Activated CD8-positive, alpha-beta memory T cell treated with anti-CD3 and anti-CD28 coated beads, Interleukin-2, amount 10 ng/mL, durations not matched to agents 7 days and 5 days (primary cell): ENCODE measurements at regions of chr6 and their contacts with region 1.

Region 1: GRCh38 chr6:29016559-29017427 is 11.7 kb upstream of the ZNF311 start:
- DNase-seq: peak; percentile 90
- ATAC-seq: peak; percentile 89
- H3K4me3 Mint-ChIP-seq: peak overlapping the region; percentile 82
- H3K27ac Mint-ChIP-seq: peak overlapping the region; percentile 92
- H3K4me1 Mint-ChIP-seq: peaks cover 16% of the 10 kb centered on the region
- H3K27me3 Mint-ChIP-seq: peaks cover 36% of the 10 kb centered on the region

Region 2: DNA sequence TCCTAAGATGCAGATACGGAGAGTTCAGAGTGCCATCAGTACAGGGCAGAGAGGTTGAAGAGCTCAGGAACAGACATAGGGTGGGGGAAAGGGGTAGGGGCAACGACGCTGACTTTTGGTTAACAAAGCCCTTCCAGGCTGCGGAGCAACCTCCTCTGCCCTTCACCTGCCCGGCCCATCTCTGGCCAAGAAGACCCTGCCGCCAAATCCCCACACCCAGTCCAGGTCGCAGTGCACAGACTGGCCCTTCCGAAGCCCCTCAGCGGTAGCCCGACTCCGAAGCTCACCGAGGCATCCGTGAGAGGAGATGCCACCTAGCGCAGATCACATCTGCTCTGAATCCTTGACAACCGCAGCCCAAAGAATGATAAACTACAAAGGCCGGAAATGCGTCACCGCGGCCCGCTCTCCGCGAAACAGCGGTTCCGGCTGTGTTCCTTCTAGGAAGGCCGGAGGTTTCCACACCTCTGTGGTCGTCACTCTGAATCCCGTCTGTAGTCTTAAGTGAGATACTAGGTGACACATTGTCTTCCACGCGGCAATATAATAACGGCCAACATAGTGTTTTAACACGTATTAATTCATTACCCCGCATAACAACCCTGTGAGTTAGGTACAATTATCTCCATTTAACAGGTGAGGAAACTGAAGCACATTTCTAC is 573.5 kb before region 1 on chr6 and contains the start of gene ZSCAN23:
- CTCF ChIA-PET with region 1: no interaction called
- DNase-seq: peak; percentile 90
- ATAC-seq: peak; percentile 90
- H3K4me3 Mint-ChIP-seq: peak within 1 kb of the TSS; percentile 83
- H3K27ac Mint-ChIP-seq: peak within 1 kb of the TSS; percentile 95
- H3K4me1 Mint-ChIP-seq: peaks cover 33% of the 10 kb centered on the region
- H3K27me3 Mint-ChIP-seq: peaks cover 35% of the 10 kb centered on the region
- total RNA-seq, gene ZSCAN23: 0.44 to 0.56 TPM

Region 3: GRCh38 chr6:28710466-28711191 is 306.2 kb before region 1 on chr6:
- CTCF ChIA-PET with region 1: no interaction called
- DNase-seq: no peak
- ATAC-seq: no peak
- H3K4me3 Mint-ChIP-seq: no peak overlapping the region
- H3K27ac Mint-ChIP-seq: no peak overlapping the region
- H3K4me1 Mint-ChIP-seq: peaks cover 9% of the 10 kb centered on the region
- H3K27me3 Mint-ChIP-seq: peaks cover 37% of the 10 kb centered on the region

Region 4: DNA sequence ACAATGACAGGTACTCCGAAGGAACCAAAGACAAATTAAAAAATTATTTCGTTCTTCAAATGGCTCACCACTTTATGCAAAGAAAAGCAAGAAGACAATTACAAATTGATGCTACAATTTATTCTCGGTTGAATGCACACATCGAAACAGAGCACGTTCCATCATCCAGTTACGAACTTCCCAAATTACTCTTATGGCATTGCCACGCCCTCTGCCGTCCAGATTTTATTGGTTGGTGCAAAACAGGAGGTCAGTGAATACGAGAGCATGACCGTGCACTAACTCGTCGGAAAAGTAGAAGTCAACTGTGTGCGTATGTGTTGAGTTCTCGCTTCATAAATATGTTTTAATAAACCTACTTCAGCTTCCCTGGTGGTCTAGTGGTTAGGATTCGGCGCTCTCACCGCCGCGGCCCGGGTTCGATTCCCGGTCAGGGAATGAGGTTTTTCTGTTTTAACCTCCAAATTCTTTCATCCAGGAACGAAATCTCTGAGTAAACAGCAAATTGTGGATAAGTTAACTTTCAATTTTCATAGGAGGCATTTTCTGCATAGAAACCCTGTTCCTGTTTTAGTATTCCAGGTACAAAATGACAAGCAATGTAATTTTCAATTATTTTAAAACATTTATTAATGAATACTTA is 34.8 kb before region 1 on chr6:
- CTCF ChIA-PET with region 1: interaction called, 23 read pairs
- DNase-seq: peak; percentile 79
- ATAC-seq: peak; percentile 70
- H3K4me3 Mint-ChIP-seq: peak overlapping the region; percentile 90
- H3K27ac Mint-ChIP-seq: peak overlapping the region; percentile 86
- H3K4me1 Mint-ChIP-seq: peaks cover 54% of the 10 kb centered on the region
- H3K27me3 Mint-ChIP-seq: peaks cover 63% of the 10 kb centered on the region

Region 5: GRCh38 chr6:29005183-29005885 is 11.5 kb before region 1 on chr6 and contains the start of gene ZNF311:
- CTCF ChIA-PET with region 1: interaction called, 14 read pairs
- DNase-seq: peak; percentile 67
- ATAC-seq: peak; percentile 97
- H3K4me3 Mint-ChIP-seq: peak within 1 kb of the TSS; percentile 74
- H3K27ac Mint-ChIP-seq: peak within 1 kb of the TSS; percentile 84
- H3K4me1 Mint-ChIP-seq: peaks cover 21% of the 10 kb centered on the region
- H3K27me3 Mint-ChIP-seq: peaks cover 21% of the 10 kb centered on the region
- total RNA-seq, gene ZNF311: 0.26 to 0.40 TPM

Region 6: GRCh38 chr6:29045075-29045474 is 28.3 kb after region 1 on chr6 and contains the start of gene OR2W1:
- CTCF ChIA-PET with region 1: no interaction called
- DNase-seq: no peak
- ATAC-seq: no peak
- H3K4me3 Mint-ChIP-seq: no peak within 1 kb of the TSS
- H3K27ac Mint-ChIP-seq: no peak within 1 kb of the TSS
- H3K4me1 Mint-ChIP-seq: no peaks in the 10 kb centered on the region
- H3K27me3 Mint-ChIP-seq: peaks cover 47% of the 10 kb centered on the region
- total RNA-seq, gene OR2W1: not detected